ENCODE measurements at regions of chr16 and their contacts with region 1.

Region 1: DNA sequence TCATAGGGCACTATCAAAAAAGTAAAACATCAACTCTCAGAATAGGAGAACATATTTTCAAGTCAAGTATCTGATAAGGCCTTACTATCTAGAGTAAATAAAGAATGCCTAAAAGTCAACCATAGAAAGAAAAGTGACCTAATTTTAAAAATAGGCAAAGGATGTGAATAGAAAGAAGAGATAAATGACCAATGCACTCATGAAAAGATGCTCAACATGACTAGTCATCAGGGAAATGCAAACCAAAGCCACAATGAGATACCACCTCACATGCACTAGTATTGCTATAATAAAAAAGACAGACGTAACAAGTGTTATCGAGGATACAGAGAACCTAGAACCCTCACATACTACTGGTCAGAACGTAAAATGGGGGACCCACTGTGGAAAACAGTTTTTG is 90.8 kb downstream of the DYNLRB2 start:
- DNase-seq: no peak
- H3K4me3 ChIP-seq: no peak overlapping the region
- H3K27ac ChIP-seq: no peak overlapping the region
- H3K4me1 ChIP-seq: no peaks in the 10 kb centered on the region
- H3K27me3 ChIP-seq: no peaks in the 10 kb centered on the region
- CTCF ChIP-seq: no peak
- POLR2A ChIP-seq: no peak

Region 2: DNA sequence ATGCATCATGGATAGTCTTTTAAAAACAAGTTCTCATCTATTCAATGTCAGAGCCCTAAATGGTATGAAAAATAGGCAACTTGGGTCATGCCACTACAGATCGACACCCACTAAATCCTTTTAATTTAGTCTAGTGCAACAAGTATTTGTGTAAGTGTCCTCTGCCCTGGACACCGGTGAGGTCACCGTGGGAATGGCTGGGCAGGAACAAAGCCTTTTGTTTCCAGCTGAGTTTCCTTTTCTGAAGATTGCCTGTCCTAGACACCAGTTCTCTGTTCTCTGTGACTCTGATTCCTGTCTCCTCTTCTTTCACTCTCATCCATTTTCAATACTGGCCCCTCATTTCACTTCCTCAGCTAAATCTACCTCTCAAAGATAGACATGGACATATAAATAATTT is 1477.5 kb before region 1 on chr16:
- intact Hi-C with region 1: no loop called
- DNase-seq: no peak
- H3K4me3 ChIP-seq: no peak overlapping the region
- H3K27ac ChIP-seq: no peak overlapping the region
- H3K4me1 ChIP-seq: no peaks in the 10 kb centered on the region
- H3K27me3 ChIP-seq: no peaks in the 10 kb centered on the region
- CTCF ChIP-seq: no peak
- POLR2A ChIP-seq: no peak

Region 3: GRCh38 chr16:80596507-80597197 is 34.9 kb before region 1 on chr16:
- intact Hi-C with region 1: loop called (anchors 1 kb)
- DNase-seq: no peak
- H3K4me3 ChIP-seq: no peak overlapping the region
- H3K27ac ChIP-seq: no peak overlapping the region
- H3K4me1 ChIP-seq: no peaks in the 10 kb centered on the region
- H3K27me3 ChIP-seq: no peaks in the 10 kb centered on the region
- CTCF ChIP-seq: no peak
- POLR2A ChIP-seq: no peak